Activated CD8-positive, alpha-beta T cell treated with anti-CD3 and anti-CD28 coated beads, Interleukin-2, amount 10 ng/mL, durations not matched to agents 7 days and 5 days (primary cell): ENCODE measurements at regions of chr1 and their contacts with region 1.

Region 1: DNA sequence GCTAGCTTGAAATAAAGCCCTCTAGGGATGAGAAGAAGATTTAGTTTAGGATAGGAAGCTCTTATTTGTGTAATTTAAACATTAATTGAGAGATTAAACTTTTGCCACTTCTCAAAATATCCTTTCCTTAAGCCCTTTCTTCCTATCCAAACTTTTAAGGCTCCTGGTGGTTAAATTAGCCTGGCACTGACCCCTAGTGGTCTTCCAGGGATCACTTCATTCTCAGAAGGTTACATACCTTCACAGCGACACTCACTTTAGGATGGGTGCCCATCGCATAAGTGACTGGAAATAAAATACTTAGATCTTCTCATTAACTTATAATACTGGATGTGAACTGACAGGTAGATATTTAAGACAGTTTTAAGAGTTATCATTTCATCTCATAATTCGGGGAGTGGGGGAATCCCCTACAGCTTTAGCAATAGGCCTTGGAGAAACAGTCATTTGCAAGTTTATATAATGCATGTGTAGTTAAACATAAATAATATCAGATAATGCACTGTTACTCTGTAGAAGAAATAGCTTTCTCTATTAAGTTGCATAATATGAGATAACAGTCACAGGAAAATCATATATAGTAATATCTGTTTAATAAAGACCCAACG is 7.4 kb downstream of the LHX9 start:
- DNase-seq: peak; percentile 63
- ATAC-seq: peak; percentile 43
- H3K4me3 Mint-ChIP-seq: no peak overlapping the region
- H3K27ac Mint-ChIP-seq: no peak overlapping the region
- H3K4me1 Mint-ChIP-seq: peaks cover 33% of the 10 kb centered on the region
- H3K27me3 Mint-ChIP-seq: peaks cover 55% of the 10 kb centered on the region

Region 2: DNA sequence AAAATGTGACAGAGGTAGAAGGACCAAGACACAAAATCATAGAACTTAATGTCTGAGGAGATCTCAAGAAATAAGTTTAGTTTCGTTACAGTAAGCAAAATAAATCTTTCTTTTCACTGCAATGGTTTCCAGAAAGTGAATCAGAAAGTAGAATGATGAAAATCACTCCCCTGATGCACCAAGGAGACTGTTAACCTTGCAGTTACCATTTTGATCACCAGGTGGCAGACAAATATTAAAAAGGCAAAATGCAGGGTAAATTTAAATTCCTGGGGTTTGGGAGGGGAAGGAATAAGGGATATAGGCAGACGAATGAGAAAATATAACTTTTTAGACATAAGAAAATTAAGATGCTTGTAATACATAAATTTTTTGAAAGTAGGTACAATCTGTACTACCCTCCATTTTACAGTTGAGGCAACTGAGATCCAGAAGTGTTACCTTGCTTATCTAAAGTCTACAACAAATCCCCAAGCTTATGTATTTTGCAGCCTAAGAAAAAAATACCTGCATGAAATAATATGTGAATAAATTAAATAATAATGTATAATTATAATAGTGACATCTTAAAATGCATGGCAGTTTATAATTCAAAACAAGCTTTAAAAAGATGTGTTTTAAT is 403.4 kb before region 1 on chr1:
- CTCF ChIA-PET with region 1: interaction called, 11 read pairs
- POLR2A ChIA-PET with region 1: no interaction called
- DNase-seq: peak; percentile 49
- ATAC-seq: peak; percentile 36
- H3K4me3 Mint-ChIP-seq: no peak overlapping the region
- H3K27ac Mint-ChIP-seq: no peak overlapping the region
- H3K4me1 Mint-ChIP-seq: no peaks in the 10 kb centered on the region
- H3K27me3 Mint-ChIP-seq: no peaks in the 10 kb centered on the region

Region 3: GRCh38 chr1:197526736-197527371 is 397.8 kb before region 1 on chr1:
- CTCF ChIA-PET with region 1: interaction called, 11 read pairs
- POLR2A ChIA-PET with region 1: no interaction called
- DNase-seq: no peak
- ATAC-seq: no peak
- H3K4me3 Mint-ChIP-seq: no peak overlapping the region
- H3K27ac Mint-ChIP-seq: no peak overlapping the region
- H3K4me1 Mint-ChIP-seq: no peaks in the 10 kb centered on the region
- H3K27me3 Mint-ChIP-seq: no peaks in the 10 kb centered on the region

Region 4: GRCh38 chr1:197614916-197615692 is 309.5 kb before region 1 on chr1:
- CTCF ChIA-PET with region 1: interaction called, 12 read pairs
- POLR2A ChIA-PET with region 1: no interaction called
- DNase-seq: peak; percentile 45
- ATAC-seq: peak; percentile 67
- H3K4me3 Mint-ChIP-seq: no peak overlapping the region
- H3K27ac Mint-ChIP-seq: no peak overlapping the region
- H3K4me1 Mint-ChIP-seq: no peaks in the 10 kb centered on the region
- H3K27me3 Mint-ChIP-seq: no peaks in the 10 kb centered on the region

Region 5: DNA sequence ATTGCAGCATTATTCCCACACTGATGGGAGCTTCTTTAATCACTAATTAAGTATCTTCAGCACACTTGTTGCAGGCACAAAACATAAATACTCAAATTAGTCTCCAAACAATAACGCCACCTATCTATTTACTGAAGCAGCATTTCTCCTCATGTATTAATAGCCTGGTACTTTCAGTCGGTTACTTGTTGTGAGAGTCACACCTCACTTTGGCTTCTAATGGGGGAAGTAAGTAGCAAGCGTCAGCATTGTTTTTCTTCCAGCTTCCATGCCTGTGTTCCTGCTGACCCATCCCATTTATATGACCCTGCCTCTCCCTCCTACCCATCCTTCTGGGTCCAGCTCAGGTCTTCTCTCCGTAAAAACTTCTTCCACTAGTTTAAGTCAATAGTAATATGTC is 117.4 kb before region 1 on chr1:
- CTCF ChIA-PET with region 1: no interaction called
- POLR2A ChIA-PET with region 1: no interaction called
- DNase-seq: no peak
- ATAC-seq: no peak
- H3K4me3 Mint-ChIP-seq: no peak overlapping the region
- H3K27ac Mint-ChIP-seq: no peak overlapping the region
- H3K4me1 Mint-ChIP-seq: peaks cover 11% of the 10 kb centered on the region
- H3K27me3 Mint-ChIP-seq: no peaks in the 10 kb centered on the region

Region 6: GRCh38 chr1:197902454-197903195 is 22.0 kb before region 1 on chr1 and contains the start of gene C1orf53:
- CTCF ChIA-PET with region 1: interaction called, 64 read pairs
- POLR2A ChIA-PET with region 1: no interaction called
- DNase-seq: peak; percentile 78
- ATAC-seq: peak; percentile 95
- H3K4me3 Mint-ChIP-seq: peak within 1 kb of the TSS; percentile 78
- H3K27ac Mint-ChIP-seq: peak within 1 kb of the TSS; percentile 77
- H3K4me1 Mint-ChIP-seq: peaks cover 17% of the 10 kb centered on the region
- H3K27me3 Mint-ChIP-seq: peaks cover 53% of the 10 kb centered on the region
- total RNA-seq, gene C1orf53: 0.68 to 0.97 TPM

Region 7: GRCh38 chr1:197955486-197956394 is 31.1 kb after region 1 on chr1:
- CTCF ChIA-PET with region 1: no interaction called
- POLR2A ChIA-PET with region 1: no interaction called
- DNase-seq: no peak
- ATAC-seq: no peak
- H3K4me3 Mint-ChIP-seq: no peak overlapping the region
- H3K27ac Mint-ChIP-seq: no peak overlapping the region
- H3K4me1 Mint-ChIP-seq: peaks cover 19% of the 10 kb centered on the region
- H3K27me3 Mint-ChIP-seq: peaks cover 3% of the 10 kb centered on the region

Region 8: GRCh38 chr1:198007011-198007410 is 82.4 kb after region 1 on chr1:
- CTCF ChIA-PET with region 1: no interaction called
- POLR2A ChIA-PET with region 1: no interaction called
- DNase-seq: no peak
- ATAC-seq: no peak
- H3K4me3 Mint-ChIP-seq: no peak overlapping the region
- H3K27ac Mint-ChIP-seq: no peak overlapping the region
- H3K4me1 Mint-ChIP-seq: no peaks in the 10 kb centered on the region
- H3K27me3 Mint-ChIP-seq: peaks cover 3% of the 10 kb centered on the region

Region 9: GRCh38 chr1:198024782-198025181 is 100.2 kb after region 1 on chr1:
- CTCF ChIA-PET with region 1: no interaction called
- POLR2A ChIA-PET with region 1: no interaction called
- DNase-seq: no peak
- ATAC-seq: no peak
- H3K4me3 Mint-ChIP-seq: no peak overlapping the region
- H3K27ac Mint-ChIP-seq: no peak overlapping the region
- H3K4me1 Mint-ChIP-seq: no peaks in the 10 kb centered on the region
- H3K27me3 Mint-ChIP-seq: peaks cover 4% of the 10 kb centered on the region